ENCODE measurements at regions of chr18 and their contacts with region 1.

Region 1: DNA sequence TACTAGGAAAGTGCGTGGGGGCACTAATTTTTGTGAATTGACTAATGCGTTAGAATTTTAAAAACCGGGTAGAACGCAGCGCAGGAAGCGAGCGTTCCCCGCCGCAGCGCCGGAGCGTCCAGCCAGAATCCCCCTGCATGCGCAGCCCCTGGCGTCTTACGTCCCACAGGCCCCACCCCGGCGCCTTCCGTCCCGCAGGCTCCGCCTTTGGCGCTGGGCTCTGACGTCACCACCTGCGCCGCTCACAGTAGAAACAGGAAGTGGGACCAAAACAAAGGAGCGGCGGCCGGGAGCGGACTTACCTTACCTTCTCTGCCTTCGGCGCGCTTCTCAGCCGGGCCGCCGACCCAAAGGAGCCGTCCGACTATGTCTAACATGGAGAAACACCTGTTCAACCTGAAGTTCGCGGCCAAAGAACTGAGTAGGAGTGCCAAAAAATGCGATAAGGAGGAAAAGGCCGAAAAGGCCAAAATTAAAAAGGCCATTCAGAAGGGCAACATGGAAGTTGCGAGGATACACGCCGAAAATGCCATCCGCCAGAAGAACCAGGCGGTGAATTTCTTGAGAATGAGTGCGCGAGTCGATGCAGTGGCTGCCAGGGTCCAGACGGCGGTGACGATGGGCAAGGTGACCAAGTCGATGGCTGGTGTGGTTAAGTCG is at the start of gene CHMP1B:
- DNase-seq: peak; percentile 94 to 99 (median 97)
- ATAC-seq: peak; percentile 85 to 93 (median 92)
- H3K4me3 ChIP-seq: peak within 1 kb of the TSS; percentile 68 to 100
- H3K4me3 Mint-ChIP-seq: peak within 1 kb of the TSS; percentile 95 to 100 (median 100)
- H3K27ac ChIP-seq: peak within 1 kb of the TSS; percentile 96
- H3K27ac Mint-ChIP-seq: peak within 1 kb of the TSS; percentile 100
- H3K4me1 ChIP-seq: peaks cover 19 to 22% of the 10 kb centered on the region in 2 experiments
- H3K4me1 Mint-ChIP-seq: peaks cover 49 to 55% (median 52%) of the 10 kb centered on the region in 3 donors
- H3K27me3 ChIP-seq: no peaks in the 10 kb centered on the region
- H3K27me3 Mint-ChIP-seq: no peaks in the 10 kb centered on the region
- total RNA-seq, gene CHMP1B: 41.5 to 105 (median 44.1) TPM

Region 2: DNA sequence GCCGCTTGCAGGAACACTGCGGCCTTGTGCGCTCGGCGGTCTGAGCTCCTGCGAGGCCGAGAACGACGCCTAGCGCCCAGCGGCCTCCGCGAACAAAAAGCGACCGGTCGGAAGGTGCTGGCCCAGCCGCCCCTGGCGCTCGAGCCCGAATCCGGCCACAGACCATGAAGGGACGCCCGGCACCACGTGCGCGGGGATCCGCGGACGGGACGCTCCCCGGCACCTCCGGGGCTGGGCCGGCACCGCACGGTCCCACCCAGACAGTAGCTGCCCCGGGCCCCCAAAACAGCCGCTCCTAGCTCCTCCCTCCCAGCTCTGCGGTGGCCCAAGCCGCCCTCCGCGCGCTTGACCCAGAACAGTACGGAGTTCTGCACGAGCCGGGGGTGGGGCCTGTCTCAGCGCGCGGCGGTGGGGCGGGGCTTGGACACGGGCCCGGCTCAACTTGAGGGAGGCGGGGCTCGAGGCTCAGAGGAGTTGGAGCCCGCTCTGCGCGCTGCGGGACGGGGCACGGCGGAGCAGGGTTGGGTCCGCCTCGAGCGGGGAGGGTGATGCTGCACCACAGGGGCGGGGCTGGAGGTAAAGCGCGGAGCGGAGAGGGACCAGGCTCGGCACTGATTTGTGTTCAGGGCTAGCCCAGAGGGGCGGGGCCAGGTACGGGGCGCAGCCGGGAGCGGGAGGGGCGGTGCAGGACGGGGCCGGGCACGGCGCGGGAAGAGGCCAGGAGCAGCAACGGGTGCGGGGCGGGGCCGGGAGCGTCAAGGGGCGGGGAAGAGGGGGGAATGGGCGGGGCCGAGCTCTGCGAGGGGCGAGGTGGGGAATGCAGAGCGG is 129.5 kb after region 1 on chr18:
- CTCF ChIA-PET with region 1: no interaction called
- POLR2A ChIA-PET with region 1: interaction called in 1 of 2 experiments, 13 read pairs
- DNase-seq: peak; percentile 82 to 96 (median 89)
- ATAC-seq: peak; percentile 90 to 94 (median 92)
- H3K4me3 ChIP-seq: peak overlapping the region; percentile 60 to 64
- H3K4me3 Mint-ChIP-seq: peak overlapping the region; percentile 79 to 84 (median 82)
- H3K27ac ChIP-seq: no peak overlapping the region
- H3K27ac Mint-ChIP-seq: peak overlapping the region; percentile 52 to 58
- H3K4me1 ChIP-seq: peaks cover 0 to 17% of the 10 kb centered on the region in 2 experiments
- H3K4me1 Mint-ChIP-seq: peaks cover 0 to 15% (median 12%) of the 10 kb centered on the region in 3 donors
- H3K27me3 ChIP-seq: peaks cover 0 to 9% of the 10 kb centered on the region in 2 experiments
- H3K27me3 Mint-ChIP-seq: no peaks in the 10 kb centered on the region

Region 3: GRCh38 chr18:12921178-12921577 is 1069.9 kb after region 1 on chr18:
- CTCF ChIA-PET with region 1: no interaction called
- POLR2A ChIA-PET with region 1: no interaction called
- DNase-seq: peak in 26 of 35 experiments; percentile 6 to 71 (median 33)
- ATAC-seq: peak; percentile 30 to 93 (median 73)
- H3K4me3 ChIP-seq: no peak overlapping the region
- H3K4me3 Mint-ChIP-seq: peak overlapping the region; percentile 25 to 39 (median 31)
- H3K27ac ChIP-seq: peak overlapping the region; percentile 1
- H3K27ac Mint-ChIP-seq: peak overlapping the region; percentile 60 to 85
- H3K4me1 ChIP-seq: peaks cover 0 to 10% of the 10 kb centered on the region in 2 experiments
- H3K4me1 Mint-ChIP-seq: peaks cover 0 to 18% (median 8%) of the 10 kb centered on the region in 3 donors
- H3K27me3 ChIP-seq: no peaks in the 10 kb centered on the region
- H3K27me3 Mint-ChIP-seq: no peaks in the 10 kb centered on the region

Region 4: GRCh38 chr18:12948042-12948804 is 1096.9 kb after region 1 on chr18:
- CTCF ChIA-PET with region 1: no interaction called
- POLR2A ChIA-PET with region 1: interaction called in 1 of 2 experiments, 10 read pairs
- DNase-seq: peak; percentile 95 to 98 (median 98)
- ATAC-seq: peak; percentile 82 to 87 (median 84)
- H3K4me3 ChIP-seq: peak overlapping the region in 1 of 2 donors; percentile 60
- H3K4me3 Mint-ChIP-seq: peak overlapping the region; percentile 92 to 98 (median 97)
- H3K27ac ChIP-seq: peak overlapping the region; percentile 91
- H3K27ac Mint-ChIP-seq: peak overlapping the region; percentile 94 to 96
- H3K4me1 ChIP-seq: peaks cover 11 to 31% of the 10 kb centered on the region in 2 experiments
- H3K4me1 Mint-ChIP-seq: peaks cover 37 to 50% (median 44%) of the 10 kb centered on the region in 3 donors
- H3K27me3 ChIP-seq: no peaks in the 10 kb centered on the region
- H3K27me3 Mint-ChIP-seq: no peaks in the 10 kb centered on the region

Measured in T-cell (primary cell).